B cell (primary cell): ENCODE measurements at regions of chr10 and their contacts with region 1.

Region 1: DNA sequence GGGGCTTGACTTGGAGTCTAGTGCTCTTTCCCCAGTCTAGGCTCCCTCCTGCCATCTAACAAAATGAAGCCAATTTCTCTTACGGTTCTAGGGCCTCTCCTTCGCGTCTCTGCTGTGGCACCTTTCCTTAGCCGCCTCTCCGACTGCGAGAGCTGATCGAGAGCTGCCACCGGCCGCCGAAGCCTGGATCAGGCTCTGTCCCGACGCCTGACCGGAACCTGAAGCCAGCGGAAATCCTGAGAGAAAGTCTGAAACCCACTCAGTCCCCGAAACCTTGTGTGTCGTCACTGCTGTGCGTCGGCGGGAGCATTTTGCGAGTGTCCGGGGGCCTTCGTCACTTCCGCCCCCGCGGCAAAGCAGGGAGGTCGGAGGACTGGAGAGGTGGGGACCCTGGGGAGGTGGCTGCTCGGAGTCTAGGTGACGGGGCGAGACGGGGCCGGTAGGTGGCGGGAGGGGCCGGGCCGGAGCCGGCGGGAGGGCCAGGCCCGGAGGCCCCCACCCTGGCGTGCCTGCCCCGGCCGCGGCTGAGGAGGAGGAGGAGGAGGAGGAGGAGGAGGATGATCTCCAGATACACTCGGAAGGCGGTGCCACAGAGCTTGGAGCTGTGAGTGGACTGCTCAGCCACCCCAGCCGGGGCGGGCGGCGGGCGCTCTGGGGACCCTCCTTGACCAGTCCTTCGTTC is at the starts of genes ECD and FAM149B1:
- DNase-seq: peak; percentile 95
- ATAC-seq: peak; percentile 97
- H3K4me3 ChIP-seq: peak within 1 kb of the TSS; percentile 72 to 99 (median 98)
- H3K4me3 Mint-ChIP-seq: peak within 1 kb of the TSS; percentile 100
- H3K27ac ChIP-seq: peak within 1 kb of the TSS; percentile 90
- H3K27ac Mint-ChIP-seq: peak within 1 kb of the TSS; percentile 97
- H3K4me1 ChIP-seq: peaks cover 18 to 19% of the 10 kb centered on the region in 2 donors
- H3K4me1 Mint-ChIP-seq: peaks cover 37% of the 10 kb centered on the region
- H3K27me3 ChIP-seq: no peaks in the 10 kb centered on the region
- H3K27me3 Mint-ChIP-seq: no peaks in the 10 kb centered on the region
- CTCF ChIP-seq: no peak
- total RNA-seq, gene ECD: 37.1 and 38.8 TPM in 2 replicates
- total RNA-seq, gene FAM149B1: 22.5 and 25.9 TPM in 2 replicates

Region 2: GRCh38 chr10:72354478-72355213 is 813.3 kb before region 1 on chr10 and contains the start of gene DNAJB12:
- CTCF ChIA-PET with region 1: no interaction called
- POLR2A ChIA-PET with region 1: no interaction called
- intact Hi-C with region 1: loop called (anchors 2 kb)
- DNase-seq: peak; percentile 97
- ATAC-seq: peak; percentile 87
- H3K4me3 ChIP-seq: peak within 1 kb of the TSS; percentile 65 to 98 (median 97)
- H3K4me3 Mint-ChIP-seq: peak within 1 kb of the TSS; percentile 99
- H3K27ac ChIP-seq: peak within 1 kb of the TSS; percentile 90 to 97
- H3K27ac Mint-ChIP-seq: peak within 1 kb of the TSS; percentile 99
- H3K4me1 ChIP-seq: peaks cover 15 to 17% of the 10 kb centered on the region in 2 donors
- H3K4me1 Mint-ChIP-seq: peaks cover 39% of the 10 kb centered on the region
- H3K27me3 ChIP-seq: no peaks in the 10 kb centered on the region
- H3K27me3 Mint-ChIP-seq: no peaks in the 10 kb centered on the region
- CTCF ChIP-seq: no peak
- total RNA-seq, gene DNAJB12: 42.3 and 44.1 TPM in 2 replicates

Region 3: DNA sequence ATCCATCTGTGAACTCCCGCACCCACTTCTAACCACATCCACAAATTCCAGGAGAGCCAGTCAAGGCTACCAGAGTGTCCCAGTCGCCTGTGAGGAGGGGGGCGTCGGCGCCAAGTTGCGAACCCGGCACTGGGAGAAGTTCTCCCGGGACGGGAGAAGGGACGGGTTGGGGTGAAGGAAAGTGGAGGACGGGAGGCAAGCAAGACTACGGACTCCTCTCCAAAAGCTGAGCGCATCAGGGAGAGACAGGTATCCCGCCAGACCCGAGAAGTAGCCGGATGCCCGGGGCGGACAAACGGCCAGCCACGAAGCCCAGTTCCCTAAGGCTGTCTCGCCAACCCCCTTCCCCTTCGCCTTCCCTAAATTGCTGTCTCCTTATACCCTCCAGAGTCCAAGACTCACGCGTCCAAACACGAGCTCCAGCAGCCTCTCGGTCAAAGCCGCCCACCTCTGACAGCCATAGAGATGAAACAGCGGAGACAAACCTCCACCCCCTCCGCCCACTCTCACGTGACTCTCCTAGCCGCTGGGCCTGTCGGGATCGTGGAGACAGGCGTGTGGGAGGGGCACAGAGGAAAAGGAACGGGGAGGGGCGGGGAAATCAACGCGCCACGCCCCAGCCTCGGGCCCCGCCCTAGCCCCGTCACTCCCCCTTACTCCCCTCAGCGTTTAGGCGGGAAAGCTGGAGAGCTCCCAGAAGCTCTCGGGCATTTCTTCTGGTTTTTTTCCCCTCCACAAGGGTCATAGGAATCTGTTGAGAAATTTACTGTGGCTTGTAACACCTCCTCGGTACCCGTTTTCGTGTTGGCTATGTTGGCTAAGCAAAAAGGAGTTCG is 542.1 kb before region 1 on chr10 and contains the start of gene MICU1:
- CTCF ChIA-PET with region 1: no interaction called
- POLR2A ChIA-PET with region 1: no interaction called
- intact Hi-C with region 1: loop called (anchors 5 kb)
- DNase-seq: peak; percentile 95
- ATAC-seq: peak; percentile 99
- H3K4me3 ChIP-seq: peak within 1 kb of the TSS; percentile 72 to 99 (median 89)
- H3K4me3 Mint-ChIP-seq: peak within 1 kb of the TSS; percentile 99
- H3K27ac ChIP-seq: peak within 1 kb of the TSS; percentile 52 to 81
- H3K27ac Mint-ChIP-seq: peak within 1 kb of the TSS; percentile 92
- H3K4me1 ChIP-seq: peaks cover 8 to 9% of the 10 kb centered on the region in 2 donors
- H3K4me1 Mint-ChIP-seq: peaks cover 13% of the 10 kb centered on the region
- H3K27me3 ChIP-seq: no peaks in the 10 kb centered on the region
- H3K27me3 Mint-ChIP-seq: no peaks in the 10 kb centered on the region
- CTCF ChIP-seq: no peak
- total RNA-seq, gene MICU1: 34.7 and 42.9 TPM in 2 replicates

Region 4: GRCh38 chr10:73110345-73110849 is 57.5 kb before region 1 on chr10 and contains the start of gene NUDT13:
- CTCF ChIA-PET with region 1: interaction called, 5 read pairs
- POLR2A ChIA-PET with region 1: no interaction called
- intact Hi-C with region 1: loop called (anchors 1 kb)
- DNase-seq: peak; percentile 80
- ATAC-seq: peak; percentile 93
- H3K4me3 ChIP-seq: peak within 1 kb of the TSS; percentile 50 to 79 (median 71)
- H3K4me3 Mint-ChIP-seq: peak within 1 kb of the TSS; percentile 97
- H3K27ac ChIP-seq: peak within 1 kb of the TSS; percentile 26 to 62
- H3K27ac Mint-ChIP-seq: peak within 1 kb of the TSS; percentile 93
- H3K4me1 ChIP-seq: peaks cover 0 to 9% of the 10 kb centered on the region in 2 donors
- H3K4me1 Mint-ChIP-seq: peaks cover 11% of the 10 kb centered on the region
- H3K27me3 ChIP-seq: no peaks in the 10 kb centered on the region
- H3K27me3 Mint-ChIP-seq: no peaks in the 10 kb centered on the region
- CTCF ChIP-seq: no peak
- total RNA-seq, gene NUDT13: 4.5 TPM in 2 replicates

Region 5: DNA sequence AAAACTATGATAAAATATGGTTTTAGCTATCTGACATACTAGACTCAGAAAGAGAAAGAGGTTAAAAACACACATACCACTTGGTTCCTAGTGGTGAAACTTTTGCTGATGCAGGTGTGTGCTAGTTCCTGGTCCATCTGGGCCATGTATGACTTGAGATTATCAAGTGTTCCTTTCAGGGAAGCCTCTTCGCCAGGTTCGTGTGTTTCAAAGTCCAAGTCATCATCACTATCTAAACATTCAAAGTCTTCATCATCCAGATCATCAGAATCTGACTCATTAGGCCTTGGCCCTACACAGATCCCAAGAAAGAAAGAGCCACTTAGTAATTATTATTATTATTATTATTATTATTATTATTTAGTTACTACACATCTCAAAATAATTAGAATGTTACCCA is 31.3 kb before region 1 on chr10:
- CTCF ChIA-PET with region 1: no interaction called
- POLR2A ChIA-PET with region 1: no interaction called
- intact Hi-C with region 1: no loop called
- DNase-seq: no peak
- ATAC-seq: no peak
- H3K4me3 ChIP-seq: no peak overlapping the region
- H3K4me3 Mint-ChIP-seq: no peak overlapping the region
- H3K27ac ChIP-seq: no peak overlapping the region
- H3K27ac Mint-ChIP-seq: no peak overlapping the region
- H3K4me1 ChIP-seq: no peaks in the 10 kb centered on the region
- H3K4me1 Mint-ChIP-seq: peaks cover 14% of the 10 kb centered on the region
- H3K27me3 ChIP-seq: no peaks in the 10 kb centered on the region
- H3K27me3 Mint-ChIP-seq: no peaks in the 10 kb centered on the region
- CTCF ChIP-seq: no peak

Region 6: GRCh38 chr10:73252445-73253224 is 84.7 kb after region 1 on chr10 and contains the start of gene MRPS16:
- CTCF ChIA-PET with region 1: no interaction called
- POLR2A ChIA-PET with region 1: no interaction called
- intact Hi-C with region 1: loop called (anchors 1 kb)
- DNase-seq: peak; percentile 95
- ATAC-seq: peak; percentile 90
- H3K4me3 ChIP-seq: peak within 1 kb of the TSS; percentile 76 to 98 (median 90)
- H3K4me3 Mint-ChIP-seq: peak within 1 kb of the TSS; percentile 100
- H3K27ac ChIP-seq: peak within 1 kb of the TSS; percentile 83 to 92
- H3K27ac Mint-ChIP-seq: peak within 1 kb of the TSS; percentile 90
- H3K4me1 ChIP-seq: peaks cover 23 to 28% of the 10 kb centered on the region in 2 donors
- H3K4me1 Mint-ChIP-seq: peaks cover 43% of the 10 kb centered on the region
- H3K27me3 ChIP-seq: no peaks in the 10 kb centered on the region
- H3K27me3 Mint-ChIP-seq: no peaks in the 10 kb centered on the region
- CTCF ChIP-seq: no peak
- total RNA-seq, gene MRPS16: 47.9 and 49.6 TPM in 2 replicates

Region 7: DNA sequence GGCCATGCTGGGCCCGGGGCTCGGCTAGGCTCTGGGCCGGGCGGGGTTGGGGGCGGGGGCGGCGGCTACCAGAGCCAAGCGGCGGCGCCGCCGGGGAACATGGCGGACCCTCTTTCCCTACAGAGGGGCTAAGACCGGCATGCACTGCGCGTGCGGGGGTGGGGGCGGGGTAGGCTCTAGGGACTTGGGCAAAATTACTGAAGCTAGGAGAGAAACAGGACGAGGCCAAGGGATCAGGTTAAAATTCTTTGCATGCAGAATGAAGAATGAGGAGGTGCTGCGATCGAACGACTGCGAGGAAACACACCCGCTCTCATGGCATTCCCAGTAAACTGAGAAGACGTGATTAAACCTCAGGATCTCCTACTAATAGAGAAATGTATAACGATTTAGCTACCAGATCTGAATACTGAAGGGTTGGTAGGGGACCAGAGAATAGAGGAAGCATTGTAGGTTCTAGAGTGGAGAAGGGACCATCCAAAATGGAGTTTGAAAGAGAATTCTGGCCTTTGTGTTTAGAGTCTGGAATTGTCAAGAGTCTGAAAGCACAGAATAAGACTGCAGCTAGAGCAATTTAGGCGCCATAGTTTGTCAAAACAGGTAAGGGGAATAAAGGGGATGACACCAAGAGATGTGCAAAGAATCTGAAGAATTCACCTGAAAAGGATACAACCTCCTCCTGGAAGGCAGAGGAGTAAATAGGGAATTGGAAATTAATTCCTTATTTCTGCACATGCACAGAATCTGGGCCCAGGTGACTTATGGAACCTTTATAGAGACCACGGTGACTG is 328.2 kb after region 1 on chr10 and contains the start of gene PPP3CB:
- CTCF ChIA-PET with region 1: no interaction called
- POLR2A ChIA-PET with region 1: no interaction called
- intact Hi-C with region 1: loop called (anchors 5 kb)
- DNase-seq: peak; percentile 94
- ATAC-seq: peak; percentile 70
- H3K4me3 ChIP-seq: peak within 1 kb of the TSS; percentile 63 to 97 (median 85)
- H3K4me3 Mint-ChIP-seq: peak within 1 kb of the TSS; percentile 94
- H3K27ac ChIP-seq: peak within 1 kb of the TSS; percentile 89 to 93
- H3K27ac Mint-ChIP-seq: peak within 1 kb of the TSS; percentile 96
- H3K4me1 ChIP-seq: peaks cover 30 to 40% of the 10 kb centered on the region in 2 donors
- H3K4me1 Mint-ChIP-seq: peaks cover 52% of the 10 kb centered on the region
- H3K27me3 ChIP-seq: no peaks in the 10 kb centered on the region
- H3K27me3 Mint-ChIP-seq: no peaks in the 10 kb centered on the region
- CTCF ChIP-seq: no peak
- total RNA-seq, gene PPP3CB: 51.2 and 52.8 TPM in 2 replicates